Dorsolateral prefrontal cortex (tissue), 120 donors: ENCODE measurements at regions of chr14 and their contacts with region 1.

Region 1: GRCh38 chr14:37172024-37172869 is at the start of gene SLC25A21:
- DNase-seq: peak; percentile 27 to 86 (median 74)
- H3K4me3 ChIP-seq: peak within 1 kb of the TSS; percentile 54 to 91 (median 77)
- H3K27ac ChIP-seq: peak within 1 kb of the TSS in 58 of 59 donors; percentile 23 to 91 (median 78)
- H3K27me3 ChIP-seq: no peaks in the 10 kb centered on the region
- CTCF ChIP-seq: peak in 36 of 56 donors; percentile 8 to 60 (median 30)
- total RNA-seq, gene SLC25A21: 0.16 to 2.6 (median 0.75) TPM in 85 of 120 experiments, not detected in the others

Region 2: GRCh38 chr14:37114001-37114400 is 58.2 kb before region 1 on chr14:
- intact Hi-C with region 1: no loop called
- DNase-seq: no peak
- H3K4me3 ChIP-seq: no peak overlapping the region
- H3K27ac ChIP-seq: no peak overlapping the region
- H3K27me3 ChIP-seq: no peaks in the 10 kb centered on the region
- CTCF ChIP-seq: no peak

Region 3: DNA sequence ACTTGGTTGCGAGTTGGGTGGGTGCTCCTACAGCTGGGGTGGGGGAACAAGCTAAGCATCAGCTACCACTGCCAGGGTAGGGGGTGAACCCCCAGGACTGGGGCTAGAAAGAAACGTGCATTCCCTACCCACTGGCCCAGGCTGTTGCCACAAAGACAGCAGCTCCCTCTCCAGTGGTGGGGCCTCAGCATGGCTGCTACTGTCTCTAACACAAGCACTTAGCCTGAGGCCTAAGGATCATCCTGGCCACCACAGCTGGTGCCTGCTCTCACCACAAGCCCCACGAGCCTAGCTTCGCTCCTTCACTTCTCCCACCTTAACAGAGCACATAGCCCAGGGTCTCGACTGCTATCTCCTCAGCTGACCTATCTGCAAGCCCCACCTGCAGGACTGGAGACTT is 18.8 kb before region 1 on chr14:
- intact Hi-C with region 1: no loop called
- DNase-seq: no peak
- H3K4me3 ChIP-seq: no peak overlapping the region
- H3K27ac ChIP-seq: no peak overlapping the region
- H3K27me3 ChIP-seq: no peaks in the 10 kb centered on the region
- CTCF ChIP-seq: no peak

Region 4: DNA sequence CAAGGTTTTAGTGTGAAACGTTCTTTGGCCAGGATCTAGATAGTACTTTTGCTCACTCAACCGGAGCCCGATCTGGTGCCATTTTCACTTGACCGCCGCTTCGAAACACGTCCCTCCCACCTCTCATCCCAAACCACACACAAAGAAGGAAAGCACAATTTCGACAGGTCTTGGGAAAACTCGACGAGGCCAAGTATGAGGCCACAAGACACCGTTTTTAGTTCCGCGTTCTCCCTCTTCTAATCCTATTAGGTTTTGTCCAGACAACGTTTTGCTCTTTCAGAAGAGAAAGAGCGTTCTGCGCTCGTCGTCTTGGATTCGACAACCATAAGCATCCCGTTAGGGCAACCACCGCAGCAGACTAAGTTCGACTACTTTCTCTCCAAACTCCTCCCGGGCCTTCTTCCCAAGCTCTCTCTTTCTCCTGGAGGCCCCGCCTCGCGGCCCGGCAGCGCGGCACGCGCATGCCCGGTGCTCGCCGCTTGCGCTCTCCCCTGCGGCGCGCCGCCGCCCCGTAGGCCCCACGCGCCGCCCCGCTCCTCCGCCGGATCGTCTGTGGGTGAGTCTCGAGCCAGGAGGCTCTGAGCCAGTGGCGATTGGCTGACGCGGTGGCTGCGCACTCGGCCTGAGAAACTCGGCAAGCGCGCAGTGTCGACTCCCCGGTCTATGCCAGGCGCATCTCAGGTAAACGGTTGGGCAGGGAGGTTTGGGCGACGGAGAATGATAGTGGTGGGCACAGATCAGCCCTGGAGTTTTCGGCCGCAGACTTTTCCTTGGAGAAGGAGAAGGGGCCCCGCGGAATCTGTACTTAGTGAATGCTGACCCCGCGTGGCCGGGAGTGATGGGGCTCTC is 25.4 kb after region 1 on chr14 and contains the start of gene MIPOL1:
- intact Hi-C with region 1: loop called (anchors 1 to 2 kb)
- DNase-seq: peak; percentile 30 to 89 (median 70)
- H3K4me3 ChIP-seq: peak within 1 kb of the TSS; percentile 43 to 87 (median 71)
- H3K27ac ChIP-seq: peak within 1 kb of the TSS in 55 of 59 donors; percentile 27 to 91 (median 77)
- H3K27me3 ChIP-seq: no peaks in the 10 kb centered on the region
- CTCF ChIP-seq: peak in 46 of 56 donors; percentile 14 to 66 (median 42)
- total RNA-seq, gene MIPOL1: 16.3 to 37.8 (median 24.5) TPM